ENCODE measurements at regions of chr12 and their contacts with region 1.

Region 1: GRCh38 chr12:123388177-123388947 is 4.4 kb downstream of the KMT5A start:
- DNase-seq: peak; percentile 75
- H3K4me3 Mint-ChIP-seq: peak overlapping the region; percentile 81
- H3K27ac Mint-ChIP-seq: peak overlapping the region; percentile 90
- H3K4me1 Mint-ChIP-seq: peaks cover 36% of the 10 kb centered on the region
- H3K27me3 Mint-ChIP-seq: no peaks in the 10 kb centered on the region

Region 2: DNA sequence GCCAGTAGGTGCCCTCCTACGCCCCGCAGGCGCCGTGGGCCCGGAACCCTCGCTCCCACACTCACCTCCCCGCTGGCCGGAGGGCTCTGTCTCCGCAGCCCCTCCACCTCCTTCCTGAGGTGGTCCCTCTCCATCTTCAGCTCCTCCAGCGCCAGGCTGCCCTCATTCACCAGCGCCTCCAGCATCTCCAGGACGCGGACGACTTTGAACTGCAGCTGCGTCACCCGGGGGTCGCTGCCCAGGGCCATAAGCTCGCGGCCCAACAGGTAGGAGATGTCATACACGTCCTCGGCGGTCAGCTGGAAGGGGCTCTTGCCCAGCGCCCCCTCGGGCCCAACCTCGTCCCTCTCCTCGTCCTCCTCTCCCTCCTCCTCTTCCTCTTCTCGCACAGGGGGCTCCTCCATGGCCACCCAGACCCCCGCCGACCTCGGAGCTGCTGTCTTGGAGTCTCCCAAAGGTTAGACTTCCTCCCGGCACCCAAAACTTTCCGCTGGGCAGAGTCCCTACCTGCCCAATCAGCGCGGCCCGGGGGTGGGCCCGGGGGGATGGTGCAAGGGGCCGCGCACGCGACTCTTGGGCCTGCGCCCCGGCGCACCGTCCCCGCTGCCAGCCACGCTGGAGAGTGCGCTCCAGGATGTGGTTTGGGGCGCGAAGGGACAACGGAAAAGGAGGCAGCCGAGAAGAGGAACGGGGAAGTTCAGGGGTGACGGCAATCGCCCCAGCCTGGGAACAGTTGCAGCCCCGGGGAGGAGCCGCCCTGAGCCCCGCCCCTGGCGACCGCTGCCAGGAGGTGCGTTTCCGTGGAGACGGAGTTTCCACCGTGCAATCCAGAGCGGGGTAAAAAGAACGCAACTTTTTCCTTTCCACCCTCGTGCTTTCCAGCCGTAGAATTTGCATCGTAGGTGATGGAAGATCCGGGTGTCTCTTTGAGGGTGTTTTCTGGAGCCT is 47.9 kb after region 1 on chr12 and contains the start of gene RILPL2:
- intact Hi-C with region 1: loop called (anchors 5 kb)
- DNase-seq: peak; percentile 91
- H3K4me3 Mint-ChIP-seq: peak within 1 kb of the TSS; percentile 100
- H3K27ac Mint-ChIP-seq: peak within 1 kb of the TSS; percentile 99
- H3K4me1 Mint-ChIP-seq: peaks cover 39% of the 10 kb centered on the region
- H3K27me3 Mint-ChIP-seq: no peaks in the 10 kb centered on the region
- total RNA-seq, gene RILPL2: 15.7 and 16.3 TPM in 2 replicates

Region 3: DNA sequence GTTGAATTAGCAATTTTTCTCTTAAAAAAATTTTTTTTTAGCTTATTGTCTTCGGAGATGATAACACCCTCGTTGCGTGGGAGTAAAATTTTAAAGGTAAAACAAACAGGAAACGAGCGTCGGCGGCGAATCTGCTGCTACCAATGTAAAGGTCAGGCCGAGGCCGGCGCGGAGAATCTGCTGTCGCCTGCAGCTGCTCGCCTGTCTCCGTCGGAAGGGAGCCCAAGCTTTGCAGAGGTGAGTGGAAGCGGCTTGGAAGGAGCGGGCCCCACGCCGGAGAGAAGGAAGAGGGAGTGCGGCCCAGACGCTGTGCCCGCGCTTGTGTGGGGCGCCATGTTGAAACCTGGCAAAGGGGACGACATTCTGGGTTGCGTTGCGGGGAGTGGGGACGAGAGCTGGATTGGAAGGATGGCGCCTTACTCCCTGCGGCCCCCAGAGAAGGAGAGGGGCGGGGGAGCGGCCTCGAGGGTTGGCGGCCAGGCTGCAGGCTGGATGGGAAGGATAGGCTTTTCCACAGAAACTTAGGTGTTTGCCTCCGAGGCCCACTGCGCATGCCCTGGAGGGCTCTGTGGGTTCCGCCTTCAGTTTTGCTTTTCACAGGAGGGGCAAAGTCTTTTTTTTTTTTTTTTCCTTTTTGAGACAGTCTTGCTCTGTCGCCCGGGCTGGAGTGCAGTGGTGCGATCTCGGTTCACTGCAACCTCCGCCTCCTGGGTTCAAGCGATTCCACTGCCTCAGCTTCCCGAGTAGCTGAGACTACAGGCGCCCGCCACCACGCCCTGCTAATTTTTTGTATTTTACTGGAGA is 69.8 kb after region 1 on chr12 and contains the start of gene SNRNP35:
- intact Hi-C with region 1: loop called (anchors 5 kb)
- DNase-seq: peak; percentile 81
- H3K4me3 Mint-ChIP-seq: peak within 1 kb of the TSS; percentile 94
- H3K27ac Mint-ChIP-seq: peak within 1 kb of the TSS; percentile 99
- H3K4me1 Mint-ChIP-seq: peaks cover 15% of the 10 kb centered on the region
- H3K27me3 Mint-ChIP-seq: no peaks in the 10 kb centered on the region
- total RNA-seq, gene SNRNP35: 27.1 and 36.4 TPM in 2 replicates